ENCODE measurements at regions of chr11 and their contacts with region 1.

Region 1: DNA sequence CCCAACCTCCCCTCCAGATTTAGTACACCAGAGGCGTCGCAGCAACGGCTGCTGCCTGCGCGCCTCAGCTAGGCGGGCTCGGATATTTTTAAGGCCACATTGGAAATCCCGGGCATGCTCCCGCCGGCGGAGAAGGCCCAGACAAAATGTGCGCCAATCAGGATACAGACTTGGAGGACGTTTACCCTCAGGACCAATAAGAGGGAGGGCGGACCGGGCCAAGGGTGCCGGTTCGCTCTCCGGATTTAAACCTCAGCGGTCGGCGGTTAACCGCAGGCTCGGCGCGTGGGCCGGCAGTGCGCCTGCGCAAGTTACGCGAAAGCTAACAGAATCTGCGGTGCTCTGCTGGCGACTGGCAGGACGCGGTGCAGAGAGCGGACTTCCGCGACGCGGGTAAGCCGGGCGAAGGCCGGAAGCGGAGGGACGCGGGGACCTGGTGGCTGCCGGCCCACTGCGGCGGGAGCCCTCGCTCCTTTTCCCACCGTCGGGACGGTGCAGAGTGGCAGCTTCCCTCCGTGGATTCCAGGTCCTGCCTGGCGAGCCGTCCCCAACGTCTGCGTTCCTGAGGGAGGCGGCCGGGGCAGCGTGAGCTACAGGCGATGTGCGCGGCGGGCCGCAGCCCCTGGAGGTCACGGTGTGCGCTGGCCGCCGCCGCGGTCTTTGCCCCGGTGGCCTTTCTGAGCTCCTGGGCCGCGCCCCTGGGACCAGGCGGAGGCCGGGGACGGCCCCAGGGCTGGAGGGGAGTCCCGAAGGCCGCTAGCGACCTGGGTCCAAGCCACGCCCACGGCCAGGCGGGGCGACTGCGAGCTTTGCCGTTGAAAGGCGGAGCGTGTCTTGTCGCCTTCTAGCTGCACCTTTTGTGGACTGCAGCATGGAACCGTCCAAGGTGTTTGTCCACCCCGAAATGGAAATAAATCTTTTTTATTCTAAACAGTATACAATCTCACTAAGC is at the start of gene HYLS1:
- DNase-seq: peak; percentile 85 to 96 (median 94)
- H3K4me3 ChIP-seq: peak within 1 kb of the TSS; percentile 76 to 99 (median 92)
- H3K27ac ChIP-seq: peak within 1 kb of the TSS; percentile 57 to 99 (median 95)
- H3K27me3 ChIP-seq: no peaks in the 10 kb centered on the region
- CTCF ChIP-seq: peak in 49 of 56 donors; percentile 7 to 60 (median 39)
- total RNA-seq, gene HYLS1: 4.1 to 13.5 (median 9.1) TPM

Region 2: DNA sequence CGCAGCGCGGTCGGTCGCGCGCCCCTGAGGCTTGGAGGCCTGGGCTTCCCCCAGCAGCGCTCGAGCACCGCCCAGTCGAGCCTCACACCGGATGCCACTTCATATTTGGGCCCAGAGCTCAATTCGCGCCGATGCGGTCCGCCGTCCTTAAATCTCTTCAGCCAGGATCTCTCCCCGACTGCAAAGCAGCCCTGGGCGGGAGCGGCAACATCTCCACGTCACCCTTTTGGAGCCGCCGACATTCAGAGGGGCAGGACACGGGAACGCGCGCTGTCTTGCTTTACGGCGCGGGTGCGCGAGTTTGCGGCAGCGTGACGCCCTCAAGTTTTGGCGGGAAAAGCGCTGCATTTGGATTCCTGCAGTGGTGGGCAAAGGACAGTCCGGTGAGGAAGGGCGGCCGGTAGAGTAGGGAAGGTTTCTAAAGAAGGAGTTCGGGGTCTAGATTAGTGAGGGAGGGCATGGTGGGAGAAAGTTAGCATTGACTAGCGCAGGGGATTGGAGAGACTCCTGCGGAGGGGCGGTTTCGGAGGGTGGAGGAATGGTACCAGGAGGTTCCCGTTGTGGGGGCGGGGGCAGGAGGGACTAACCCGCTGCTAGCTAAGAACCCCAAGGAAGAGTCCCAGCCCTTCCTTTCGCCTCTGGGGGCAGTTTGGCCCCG is 261.9 kb before region 1 on chr11:
- intact Hi-C with region 1: loop called (anchors 5 kb)
- DNase-seq: peak; percentile 82 to 95 (median 88)
- H3K4me3 ChIP-seq: peak overlapping the region; percentile 55 to 95 (median 78)
- H3K27ac ChIP-seq: peak overlapping the region; percentile 73 to 99 (median 95)
- H3K27me3 ChIP-seq: no peaks in the 10 kb centered on the region
- CTCF ChIP-seq: peak in 33 of 56 donors; percentile 2 to 60 (median 29)

Region 3: GRCh38 chr11:125902927-125903710 is 15.5 kb after region 1 on chr11 and contains the start of gene PUS3:
- intact Hi-C with region 1: loop called in 1 of 2 experiments (anchors 2 kb)
- DNase-seq: peak; percentile 87 to 95 (median 92)
- H3K4me3 ChIP-seq: peak within 1 kb of the TSS; percentile 50 to 94 (median 79)
- H3K27ac ChIP-seq: peak within 1 kb of the TSS in 57 of 59 donors; percentile 13 to 96 (median 82)
- H3K27me3 ChIP-seq: peaks cover 0 to 13% (median 0%) of the 10 kb centered on the region in 45 donors
- CTCF ChIP-seq: peak in 18 of 56 donors; percentile 7 to 47 (median 16)
- total RNA-seq, gene PUS3: 3.9 to 13.9 (median 7.6) TPM

Measured in dorsolateral prefrontal cortex (tissue), 120 donors.